Activated CD4-positive, alpha-beta memory T cell treated with anti-CD3 and anti-CD28 coated beads for 36 hours (primary cell): ENCODE measurements at regions of chr5 and their contacts with region 1.

Region 1: DNA sequence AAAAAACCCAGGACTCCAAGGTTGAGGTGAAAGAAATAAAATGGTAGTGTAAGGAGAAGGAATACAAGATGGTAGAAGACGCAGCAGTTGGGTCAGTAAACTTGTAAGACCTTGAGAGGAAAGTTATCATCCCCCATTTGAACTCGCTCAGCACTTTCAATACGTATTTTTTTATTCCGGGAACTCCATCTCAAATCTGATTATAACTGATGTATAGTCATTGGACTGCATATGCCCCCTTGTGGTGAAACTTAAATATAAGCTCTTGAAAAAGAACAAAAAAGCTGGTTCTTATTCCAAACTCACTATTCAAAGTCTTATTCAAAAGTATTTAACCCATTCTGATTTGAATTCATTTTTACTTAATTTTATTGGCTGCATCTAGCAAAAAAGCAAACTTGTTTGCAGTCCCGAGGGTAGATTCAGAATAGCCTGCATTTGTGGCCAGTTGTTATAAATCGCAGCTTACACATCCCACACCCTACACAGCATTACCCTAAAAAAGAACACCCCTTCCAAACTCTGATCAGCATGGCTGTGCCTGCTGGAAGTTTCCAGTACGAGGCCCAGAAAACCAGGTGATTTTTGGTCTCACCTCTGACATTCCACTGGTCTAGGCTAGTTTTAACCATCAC is 118.0 kb downstream of the ESM1 start:
- DNase-seq: no peak
- H3K4me3 Mint-ChIP-seq: no peak overlapping the region
- H3K27ac Mint-ChIP-seq: no peak overlapping the region
- H3K4me1 Mint-ChIP-seq: peaks cover 20% of the 10 kb centered on the region
- H3K27me3 Mint-ChIP-seq: peaks cover 40% of the 10 kb centered on the region

Region 2: DNA sequence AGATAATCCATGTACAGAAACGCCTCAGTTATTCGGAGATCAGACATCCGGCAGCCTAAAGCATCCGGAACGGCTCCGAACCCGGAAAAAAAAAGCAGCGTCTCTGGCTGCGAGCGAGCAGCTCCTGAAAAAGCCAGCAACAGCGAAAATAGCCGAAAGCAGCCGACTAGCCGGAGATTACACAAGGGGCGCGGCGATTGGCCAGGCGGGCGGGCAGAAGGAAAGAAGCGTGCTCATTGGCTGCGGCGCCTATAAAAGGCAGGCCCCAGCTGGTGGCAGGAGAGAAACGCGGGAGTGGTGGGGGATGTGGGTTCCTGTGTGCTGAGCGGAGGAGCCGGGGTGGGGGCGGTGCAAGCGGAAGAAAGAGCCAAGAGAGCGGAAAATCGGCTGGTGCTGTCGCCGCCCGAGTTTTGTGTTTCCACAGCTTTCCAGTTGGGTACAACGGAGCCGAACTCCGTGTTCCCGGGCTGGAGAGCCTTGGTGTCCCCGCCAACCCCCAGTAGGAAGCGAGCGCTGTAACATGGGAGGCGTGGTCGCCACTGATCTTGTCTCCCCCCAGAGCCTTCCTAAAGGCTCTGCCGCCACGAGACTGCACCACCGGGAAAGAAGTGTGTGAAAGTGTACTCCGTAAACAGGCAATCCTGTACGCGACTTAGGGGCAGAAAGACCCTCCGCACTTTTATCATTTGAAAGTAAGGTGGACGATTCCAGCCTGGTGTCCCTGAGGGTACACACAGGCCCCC is 556.8 kb before region 1 on chr5 and contains the start of gene ARL15:
- CTCF ChIA-PET with region 1: no interaction called
- POLR2A ChIA-PET with region 1: no interaction called
- intact Hi-C with region 1: loop called (anchors 10 kb)
- DNase-seq: peak; percentile 98
- H3K4me3 Mint-ChIP-seq: peak within 1 kb of the TSS; percentile 86
- H3K27ac Mint-ChIP-seq: peak within 1 kb of the TSS; percentile 89
- H3K4me1 Mint-ChIP-seq: peaks cover 25% of the 10 kb centered on the region
- H3K27me3 Mint-ChIP-seq: peaks cover 3% of the 10 kb centered on the region
- total RNA-seq, gene ARL15: 4.5 to 5.5 TPM

Region 3: GRCh38 chr5:54524704-54525103 is 342.7 kb before region 1 on chr5:
- CTCF ChIA-PET with region 1: interaction called, 77 read pairs
- POLR2A ChIA-PET with region 1: no interaction called
- intact Hi-C with region 1: no loop called
- DNase-seq: no peak
- H3K4me3 Mint-ChIP-seq: no peak overlapping the region
- H3K27ac Mint-ChIP-seq: no peak overlapping the region
- H3K4me1 Mint-ChIP-seq: peaks cover 60% of the 10 kb centered on the region
- H3K27me3 Mint-ChIP-seq: no peaks in the 10 kb centered on the region

Region 4: DNA sequence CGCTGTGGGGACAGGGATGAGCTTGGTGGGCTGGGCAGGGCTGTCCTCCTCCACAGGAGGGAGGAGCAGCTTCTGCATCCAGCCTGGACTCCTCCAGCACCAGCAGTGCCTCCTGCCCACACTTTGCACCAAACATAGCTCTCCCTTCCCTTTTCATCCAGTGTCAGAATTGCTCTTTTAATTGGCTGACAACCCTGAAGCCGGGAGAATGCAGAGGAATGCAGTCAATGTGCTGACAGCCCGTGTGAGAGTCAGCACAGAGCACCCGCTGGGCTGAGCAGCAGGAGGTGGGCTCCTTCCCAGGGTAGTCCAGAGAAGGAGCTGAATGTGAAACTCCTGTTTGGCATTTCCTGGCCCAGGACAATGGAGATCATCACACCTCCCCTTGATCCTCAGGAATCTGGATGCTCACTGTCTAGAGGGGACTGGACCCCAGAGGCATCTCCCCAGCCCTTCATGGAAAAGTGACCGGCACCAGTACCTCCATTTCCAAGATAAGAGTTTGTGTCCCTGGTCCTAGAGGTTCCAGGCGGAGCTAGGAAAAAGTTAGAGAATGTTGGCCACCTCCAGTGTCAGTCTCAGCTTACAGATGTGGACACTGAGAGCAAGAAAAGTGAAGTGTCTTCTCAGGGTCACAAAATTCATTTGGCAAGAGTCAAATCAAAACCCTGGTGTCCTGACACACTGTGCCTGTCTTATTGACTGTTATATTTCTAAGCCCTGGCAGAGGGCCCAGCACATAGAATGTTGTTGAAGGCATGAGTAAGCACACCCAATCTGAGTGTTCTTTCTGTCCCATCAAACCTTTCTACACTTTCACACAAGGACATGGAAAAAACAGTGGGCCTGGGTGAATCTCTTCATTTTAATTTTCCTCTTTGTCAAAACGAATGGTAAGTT is 147.8 kb before region 1 on chr5:
- CTCF ChIA-PET with region 1: no interaction called
- POLR2A ChIA-PET with region 1: no interaction called
- intact Hi-C with region 1: loop called (anchors 1 kb)
- DNase-seq: peak; percentile 67
- H3K4me3 Mint-ChIP-seq: no peak overlapping the region
- H3K27ac Mint-ChIP-seq: peak overlapping the region; percentile 42
- H3K4me1 Mint-ChIP-seq: peaks cover 34% of the 10 kb centered on the region
- H3K27me3 Mint-ChIP-seq: peaks cover under 1% of the 10 kb centered on the region

Region 5: DNA sequence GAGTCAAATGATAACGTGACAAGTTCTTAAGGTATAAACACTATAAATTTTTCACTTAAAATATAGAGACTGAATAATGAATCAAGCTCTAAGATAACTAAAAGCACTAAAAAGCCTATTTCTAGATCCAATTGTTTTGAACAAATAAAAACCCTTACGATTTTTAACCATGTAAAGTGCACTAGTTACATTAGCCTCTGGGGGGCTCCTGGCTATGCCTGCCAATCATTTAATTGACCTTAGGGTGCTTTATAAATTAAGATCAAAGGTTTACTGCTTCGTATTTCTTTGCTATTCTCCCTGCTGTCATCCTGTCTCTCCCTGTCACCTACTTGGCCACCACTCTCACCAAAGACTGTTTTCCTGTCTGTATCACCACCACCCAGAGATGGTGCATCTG is 15.4 kb before region 1 on chr5:
- CTCF ChIA-PET with region 1: interaction called, 14 read pairs
- POLR2A ChIA-PET with region 1: no interaction called
- intact Hi-C with region 1: loop called (anchors 2 kb)
- DNase-seq: no peak
- H3K4me3 Mint-ChIP-seq: no peak overlapping the region
- H3K27ac Mint-ChIP-seq: no peak overlapping the region
- H3K4me1 Mint-ChIP-seq: no peaks in the 10 kb centered on the region
- H3K27me3 Mint-ChIP-seq: peaks cover 23% of the 10 kb centered on the region

Region 6: GRCh38 chr5:54895816-54896341 is 28.5 kb after region 1 on chr5:
- CTCF ChIA-PET with region 1: interaction called, 11 read pairs
- POLR2A ChIA-PET with region 1: no interaction called
- intact Hi-C with region 1: no loop called
- DNase-seq: no peak
- H3K4me3 Mint-ChIP-seq: no peak overlapping the region
- H3K27ac Mint-ChIP-seq: no peak overlapping the region
- H3K4me1 Mint-ChIP-seq: peaks cover 5% of the 10 kb centered on the region
- H3K27me3 Mint-ChIP-seq: peaks cover 54% of the 10 kb centered on the region